Naive thymus-derived CD4-positive, alpha-beta T cell (primary cell): ENCODE measurements at regions of chr14 and their contacts with region 1.

Region 1: GRCh38 chr14:22065347-22065746 is 391.7 kb upstream of the OR4E1 start:
- DNase-seq: peak in 4 of 9 donors; percentile 26 to 50 (median 37)
- ATAC-seq: no peak
- H3K4me3 ChIP-seq: no peak overlapping the region
- H3K4me3 Mint-ChIP-seq: peak overlapping the region in 9 of 10 donors; percentile 33 to 74 (median 56)
- H3K27ac ChIP-seq: no peak overlapping the region
- H3K27ac Mint-ChIP-seq: peak overlapping the region in 7 of 9 donors; percentile 46 to 89 (median 84)
- H3K4me1 ChIP-seq: peaks cover 0 to 13% of the 10 kb centered on the region in 2 donors
- H3K4me1 Mint-ChIP-seq: peaks cover 4 to 44% (median 37%) of the 10 kb centered on the region in 7 donors
- H3K27me3 ChIP-seq: no peaks in the 10 kb centered on the region
- H3K27me3 Mint-ChIP-seq: no peaks in the 10 kb centered on the region

Region 2: GRCh38 chr14:22010545-22011252 is 54.6 kb before region 1 on chr14:
- CTCF ChIA-PET with region 1: no interaction called
- POLR2A ChIA-PET with region 1: no interaction called
- intact Hi-C with region 1: no loop called
- DNase-seq: no peak
- ATAC-seq: no peak
- H3K4me3 ChIP-seq: no peak overlapping the region
- H3K4me3 Mint-ChIP-seq: no peak overlapping the region
- H3K27ac ChIP-seq: no peak overlapping the region
- H3K27ac Mint-ChIP-seq: peak overlapping the region in 4 of 9 donors; percentile 34 to 82 (median 42)
- H3K4me1 ChIP-seq: peaks cover 0 to 9% of the 10 kb centered on the region in 2 donors
- H3K4me1 Mint-ChIP-seq: peaks cover 2 to 21% (median 16%) of the 10 kb centered on the region in 7 donors
- H3K27me3 ChIP-seq: no peaks in the 10 kb centered on the region
- H3K27me3 Mint-ChIP-seq: no peaks in the 10 kb centered on the region

Region 3: GRCh38 chr14:22052795-22053194 is 12.6 kb before region 1 on chr14:
- CTCF ChIA-PET with region 1: interaction called, 12 read pairs
- POLR2A ChIA-PET with region 1: interaction called, 25 read pairs
- intact Hi-C with region 1: loop called (anchors 1 kb)
- DNase-seq: peak in 5 of 9 donors; percentile 20 to 33 (median 21)
- ATAC-seq: peak; percentile 54
- H3K4me3 ChIP-seq: peak overlapping the region; percentile 57
- H3K4me3 Mint-ChIP-seq: peak overlapping the region; percentile 56 to 97 (median 84)
- H3K27ac ChIP-seq: peak overlapping the region; percentile 59
- H3K27ac Mint-ChIP-seq: peak overlapping the region in 8 of 9 donors; percentile 46 to 100 (median 99)
- H3K4me1 ChIP-seq: peaks cover 0 to 5% of the 10 kb centered on the region in 2 donors
- H3K4me1 Mint-ChIP-seq: peaks cover 5 to 56% (median 50%) of the 10 kb centered on the region in 7 donors
- H3K27me3 ChIP-seq: no peaks in the 10 kb centered on the region
- H3K27me3 Mint-ChIP-seq: peaks cover 0 to 2% (median 0%) of the 10 kb centered on the region in 5 donors

Region 4: GRCh38 chr14:22099942-22100763 is 34.8 kb after region 1 on chr14:
- CTCF ChIA-PET with region 1: interaction called, 13 read pairs
- POLR2A ChIA-PET with region 1: interaction called, 5 read pairs
- intact Hi-C with region 1: loop called (anchors 1 to 5 kb)
- DNase-seq: peak in 8 of 9 donors; percentile 31 to 74 (median 56)
- ATAC-seq: peak; percentile 83
- H3K4me3 ChIP-seq: no peak overlapping the region
- H3K4me3 Mint-ChIP-seq: peak overlapping the region in 3 of 10 donors; percentile 47 to 53 (median 48)
- H3K27ac ChIP-seq: no peak overlapping the region
- H3K27ac Mint-ChIP-seq: peak overlapping the region in 2 of 9 donors; percentile 25 to 49
- H3K4me1 ChIP-seq: peaks cover 3 to 29% of the 10 kb centered on the region in 2 donors
- H3K4me1 Mint-ChIP-seq: peaks cover 1 to 62% (median 48%) of the 10 kb centered on the region in 7 donors
- H3K27me3 ChIP-seq: no peaks in the 10 kb centered on the region
- H3K27me3 Mint-ChIP-seq: no peaks in the 10 kb centered on the region